CD8-positive, alpha-beta T cell (primary cell): ENCODE measurements at regions of chr19 and their contacts with region 1.

Region 1: DNA sequence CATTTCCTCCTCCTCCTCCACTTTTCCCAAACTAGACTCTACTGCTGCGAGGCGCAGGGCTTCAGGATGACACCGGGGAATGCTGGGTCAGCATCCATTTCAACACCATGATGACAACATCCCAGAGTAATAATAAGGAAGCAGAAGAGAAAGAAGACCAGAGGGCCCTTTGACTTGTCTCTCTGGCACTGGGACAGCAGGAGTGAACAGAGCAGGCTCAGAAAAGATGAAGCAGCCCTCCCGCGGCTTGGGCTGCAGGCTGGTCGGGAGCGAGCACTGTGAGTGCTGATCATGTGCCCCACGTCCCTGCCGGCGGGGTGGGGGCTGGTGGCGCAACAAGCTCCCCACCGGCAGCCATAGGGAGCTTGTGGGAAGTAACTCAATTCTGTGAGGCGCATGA is 30.5 kb downstream of the RANBP3 start:
- DNase-seq: no peak
- ATAC-seq: no peak
- H3K4me3 ChIP-seq: no peak overlapping the region
- H3K4me3 Mint-ChIP-seq: no peak overlapping the region
- H3K27ac ChIP-seq: no peak overlapping the region
- H3K27ac Mint-ChIP-seq: peak overlapping the region; percentile 88
- H3K4me1 ChIP-seq: peaks cover 67% of the 10 kb centered on the region
- H3K4me1 Mint-ChIP-seq: peaks cover 79% of the 10 kb centered on the region
- H3K27me3 ChIP-seq: no peaks in the 10 kb centered on the region
- H3K27me3 Mint-ChIP-seq: no peaks in the 10 kb centered on the region
- CTCF ChIP-seq: no peak

Region 2: DNA sequence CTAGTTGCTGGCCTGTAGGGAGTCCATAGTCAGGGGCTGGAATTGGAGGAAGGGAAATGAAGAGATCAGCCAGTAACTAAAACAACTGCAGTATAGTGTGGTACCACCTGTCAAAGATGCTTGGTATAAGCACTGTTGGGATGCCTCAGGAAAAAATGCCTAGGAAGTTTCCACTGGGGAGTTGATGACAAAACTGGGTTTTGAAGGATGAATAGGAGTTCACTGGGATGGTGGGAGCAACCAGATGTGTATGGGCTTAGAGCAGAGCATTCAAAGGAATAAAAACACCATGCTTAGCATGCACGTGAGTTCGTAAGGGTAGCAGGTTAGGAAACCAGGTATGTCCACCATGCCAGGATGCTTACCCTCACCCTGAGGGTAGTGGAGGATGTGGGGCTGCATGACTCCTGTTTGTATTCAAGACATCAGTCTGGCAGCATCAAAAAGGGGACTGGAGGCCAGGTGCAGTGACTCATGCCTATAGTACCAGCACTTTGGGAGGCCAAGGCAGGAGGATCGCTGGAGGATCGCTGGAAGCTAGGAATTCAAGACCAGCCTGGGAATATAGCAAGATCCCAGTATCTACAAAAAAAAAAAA is 219.9 kb before region 1 on chr19:
- CTCF ChIA-PET with region 1: no interaction called
- POLR2A ChIA-PET with region 1: no interaction called
- intact Hi-C with region 1: no loop called
- DNase-seq: no peak
- ATAC-seq: no peak
- H3K4me3 ChIP-seq: no peak overlapping the region
- H3K4me3 Mint-ChIP-seq: no peak overlapping the region
- H3K27ac ChIP-seq: no peak overlapping the region
- H3K27ac Mint-ChIP-seq: no peak overlapping the region
- H3K4me1 ChIP-seq: no peaks in the 10 kb centered on the region
- H3K4me1 Mint-ChIP-seq: no peaks in the 10 kb centered on the region
- H3K27me3 ChIP-seq: no peaks in the 10 kb centered on the region
- H3K27me3 Mint-ChIP-seq: no peaks in the 10 kb centered on the region
- CTCF ChIP-seq: no peak

Region 3: GRCh38 chr19:5961969-5962945 is 14.8 kb after region 1 on chr19:
- CTCF ChIA-PET with region 1: interaction called, 53 read pairs
- POLR2A ChIA-PET with region 1: interaction called, 32 read pairs
- intact Hi-C with region 1: loop called in 1 of 2 experiments (anchors 2 kb)
- DNase-seq: peak; percentile 62 to 93 (median 81)
- ATAC-seq: peak; percentile 92
- H3K4me3 ChIP-seq: peak overlapping the region; percentile 22 to 29
- H3K4me3 Mint-ChIP-seq: peak overlapping the region; percentile 78
- H3K27ac ChIP-seq: peak overlapping the region; percentile 81 to 89
- H3K27ac Mint-ChIP-seq: peak overlapping the region; percentile 100
- H3K4me1 ChIP-seq: peaks cover 96% of the 10 kb centered on the region
- H3K4me1 Mint-ChIP-seq: peaks cover 91% of the 10 kb centered on the region
- H3K27me3 ChIP-seq: no peaks in the 10 kb centered on the region
- H3K27me3 Mint-ChIP-seq: no peaks in the 10 kb centered on the region
- CTCF ChIP-seq: peak; percentile 23

Region 4: GRCh38 chr19:5967994-5968430 is 20.6 kb after region 1 on chr19:
- CTCF ChIA-PET with region 1: interaction called, 53 read pairs
- POLR2A ChIA-PET with region 1: interaction called, 32 read pairs
- intact Hi-C with region 1: loop called in 1 of 2 experiments (anchors 2 kb)
- DNase-seq: peak in 8 of 9 experiments; percentile 46 to 81 (median 68)
- ATAC-seq: peak; percentile 81
- H3K4me3 ChIP-seq: no peak overlapping the region
- H3K4me3 Mint-ChIP-seq: peak overlapping the region; percentile 50
- H3K27ac ChIP-seq: no peak overlapping the region
- H3K27ac Mint-ChIP-seq: peak overlapping the region; percentile 83
- H3K4me1 ChIP-seq: peaks cover 89% of the 10 kb centered on the region
- H3K4me1 Mint-ChIP-seq: peaks cover 86% of the 10 kb centered on the region
- H3K27me3 ChIP-seq: no peaks in the 10 kb centered on the region
- H3K27me3 Mint-ChIP-seq: no peaks in the 10 kb centered on the region
- CTCF ChIP-seq: peak; percentile 94

Region 5: GRCh38 chr19:5994405-5995165 is 47.1 kb after region 1 on chr19:
- CTCF ChIA-PET with region 1: no interaction called
- POLR2A ChIA-PET with region 1: no interaction called
- intact Hi-C with region 1: no loop called
- DNase-seq: no peak
- ATAC-seq: no peak
- H3K4me3 ChIP-seq: no peak overlapping the region
- H3K4me3 Mint-ChIP-seq: no peak overlapping the region
- H3K27ac ChIP-seq: no peak overlapping the region
- H3K27ac Mint-ChIP-seq: no peak overlapping the region
- H3K4me1 ChIP-seq: no peaks in the 10 kb centered on the region
- H3K4me1 Mint-ChIP-seq: peaks cover 5% of the 10 kb centered on the region
- H3K27me3 ChIP-seq: no peaks in the 10 kb centered on the region
- H3K27me3 Mint-ChIP-seq: no peaks in the 10 kb centered on the region
- CTCF ChIP-seq: no peak

Region 6: GRCh38 chr19:6005321-6006069 is 58.1 kb after region 1 on chr19:
- CTCF ChIA-PET with region 1: no interaction called
- POLR2A ChIA-PET with region 1: no interaction called
- intact Hi-C with region 1: no loop called
- DNase-seq: no peak
- ATAC-seq: no peak
- H3K4me3 ChIP-seq: no peak overlapping the region
- H3K4me3 Mint-ChIP-seq: no peak overlapping the region
- H3K27ac ChIP-seq: no peak overlapping the region
- H3K27ac Mint-ChIP-seq: no peak overlapping the region
- H3K4me1 ChIP-seq: no peaks in the 10 kb centered on the region
- H3K4me1 Mint-ChIP-seq: no peaks in the 10 kb centered on the region
- H3K27me3 ChIP-seq: no peaks in the 10 kb centered on the region
- H3K27me3 Mint-ChIP-seq: no peaks in the 10 kb centered on the region
- CTCF ChIP-seq: no peak